ENCODE measurements at regions of chr1 and their contacts with region 1.

Region 1: GRCh38 chr1:110903853-110904484 is 31.0 kb downstream of the CD53 start:
- DNase-seq: no peak
- ATAC-seq: peak; percentile 26
- H3K4me3 Mint-ChIP-seq: no peak overlapping the region
- H3K27ac Mint-ChIP-seq: peak overlapping the region; percentile 57
- H3K4me1 Mint-ChIP-seq: peaks cover 41% of the 10 kb centered on the region
- H3K27me3 Mint-ChIP-seq: no peaks in the 10 kb centered on the region
- CTCF ChIP-seq: no peak

Region 2: GRCh38 chr1:110918016-110918415 is 14.0 kb after region 1 on chr1:
- CTCF ChIA-PET with region 1: no interaction called
- POLR2A ChIA-PET with region 1: no interaction called
- intact Hi-C with region 1: loop called (anchors 2 kb)
- DNase-seq: no peak
- ATAC-seq: no peak
- H3K4me3 Mint-ChIP-seq: no peak overlapping the region
- H3K27ac Mint-ChIP-seq: no peak overlapping the region
- H3K4me1 Mint-ChIP-seq: peaks cover 6% of the 10 kb centered on the region
- H3K27me3 Mint-ChIP-seq: no peaks in the 10 kb centered on the region
- CTCF ChIP-seq: no peak

Measured in activated B cell treated with CpG ODN at 0.5 μM for 24 hours (primary cell).